IMR-90 (cell line): ENCODE measurements at regions of chr17 and their contacts with region 1.

Region 1: DNA sequence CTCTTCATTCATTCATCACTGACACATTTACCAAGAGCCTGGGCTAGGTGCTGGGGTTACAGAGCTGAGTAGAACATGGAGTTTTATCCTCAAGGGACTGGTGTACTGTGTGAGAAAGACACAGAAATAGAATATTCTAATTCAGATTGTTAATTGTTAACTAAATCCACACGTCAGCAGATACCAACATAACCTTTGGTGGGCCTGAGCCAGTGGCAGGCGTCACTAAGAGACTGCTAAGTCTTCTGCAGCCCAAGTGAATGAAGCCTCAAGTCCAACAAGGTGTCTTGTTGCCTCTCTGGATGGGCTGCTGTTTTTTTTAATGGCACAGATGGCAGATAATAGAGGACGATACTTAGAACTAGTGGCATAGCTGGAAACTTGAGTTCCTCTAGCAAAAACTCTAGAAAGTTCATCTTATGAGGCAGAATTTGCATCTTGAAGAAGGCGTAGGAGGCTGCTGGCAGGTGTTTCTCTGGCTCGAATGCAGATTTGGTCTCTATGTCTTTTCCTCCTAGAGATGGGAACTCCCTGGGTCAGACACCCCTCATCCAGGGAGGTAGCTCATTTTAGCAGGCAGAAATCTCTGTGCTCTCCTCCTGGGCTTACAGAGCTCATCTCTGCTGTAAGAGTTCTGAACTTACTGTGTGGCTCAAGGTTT is 179.5 kb downstream of the NTN1 start:
- DNase-seq: no peak
- ATAC-seq: no peak
- H3K4me3 ChIP-seq: no peak overlapping the region
- H3K27ac ChIP-seq: no peak overlapping the region
- H3K4me1 ChIP-seq: no peaks in the 10 kb centered on the region
- H3K27me3 ChIP-seq: peaks cover 11% of the 10 kb centered on the region; the same call in 1 of the 2 replicates
- CTCF ChIP-seq: no peak
- POLR2A ChIP-seq: no peak
- RAD21 ChIP-seq: no peak

Region 2: DNA sequence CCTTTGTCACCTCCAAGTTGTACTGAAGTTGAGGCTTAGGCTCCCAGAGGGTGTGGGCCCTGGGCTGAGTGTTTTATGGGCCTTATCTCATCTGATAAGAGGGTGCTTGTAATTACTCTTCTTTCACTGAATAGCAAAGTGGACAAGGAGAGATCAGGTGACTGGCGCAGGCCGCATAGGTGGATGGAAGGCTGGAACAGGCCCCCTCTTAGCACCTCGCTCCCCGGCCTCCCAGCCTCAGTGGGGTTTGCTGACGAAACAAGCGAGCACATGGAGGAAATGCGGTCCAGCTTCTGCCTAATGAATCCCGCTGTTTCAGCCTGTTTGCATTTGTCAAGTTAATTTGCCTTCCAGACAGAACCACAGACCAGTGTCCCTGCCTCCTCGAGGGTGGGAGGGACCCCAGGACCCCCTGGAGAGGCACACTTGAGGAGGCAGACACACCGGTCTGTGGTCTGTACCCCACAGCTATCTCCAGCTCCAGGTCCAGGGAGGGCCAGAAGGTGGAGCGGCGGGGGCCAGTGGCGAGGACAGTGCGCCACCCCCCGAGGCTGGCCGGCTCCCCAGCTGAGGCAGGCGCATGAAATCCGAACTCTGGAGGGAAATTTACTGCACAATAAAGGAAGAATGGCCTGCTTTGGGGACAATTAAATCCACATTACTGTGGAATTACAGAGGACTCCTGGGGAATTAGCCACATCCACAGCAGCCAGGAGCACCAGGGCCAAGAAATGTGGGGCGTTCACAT is 56.2 kb before region 1 on chr17:
- CTCF ChIA-PET with region 1: no interaction called
- POLR2A ChIA-PET with region 1: no interaction called
- dilution Hi-C with region 1: no loop called
- in situ Hi-C with region 1: loop called (anchors 10 kb)
- intact Hi-C with region 1: no loop called
- DNase-seq: no peak
- ATAC-seq: no peak
- H3K4me3 ChIP-seq: no peak overlapping the region
- H3K27ac ChIP-seq: no peak overlapping the region
- H3K4me1 ChIP-seq: no peaks in the 10 kb centered on the region
- H3K27me3 ChIP-seq: no peaks in the 10 kb centered on the region; the same call in 1 of the 2 replicates
- CTCF ChIP-seq: no peak
- POLR2A ChIP-seq: no peak
- RAD21 ChIP-seq: no peak

Region 3: GRCh38 chr17:9256751-9257629 is 56.2 kb after region 1 on chr17:
- CTCF ChIA-PET with region 1: no interaction called
- POLR2A ChIA-PET with region 1: no interaction called
- dilution Hi-C with region 1: no loop called
- in situ Hi-C with region 1: no loop called
- intact Hi-C with region 1: no loop called
- DNase-seq: peak; percentile 52
- ATAC-seq: peak; percentile 87
- H3K4me3 ChIP-seq: no peak overlapping the region
- H3K27ac ChIP-seq: peak overlapping the region; percentile 88
- H3K4me1 ChIP-seq: peaks cover 15% of the 10 kb centered on the region
- H3K27me3 ChIP-seq: no peaks in the 10 kb centered on the region
- CTCF ChIP-seq: no peak
- POLR2A ChIP-seq: no peak
- RAD21 ChIP-seq: no peak